ENCODE measurements at regions of chr20 and their contacts with region 1.

Region 1: DNA sequence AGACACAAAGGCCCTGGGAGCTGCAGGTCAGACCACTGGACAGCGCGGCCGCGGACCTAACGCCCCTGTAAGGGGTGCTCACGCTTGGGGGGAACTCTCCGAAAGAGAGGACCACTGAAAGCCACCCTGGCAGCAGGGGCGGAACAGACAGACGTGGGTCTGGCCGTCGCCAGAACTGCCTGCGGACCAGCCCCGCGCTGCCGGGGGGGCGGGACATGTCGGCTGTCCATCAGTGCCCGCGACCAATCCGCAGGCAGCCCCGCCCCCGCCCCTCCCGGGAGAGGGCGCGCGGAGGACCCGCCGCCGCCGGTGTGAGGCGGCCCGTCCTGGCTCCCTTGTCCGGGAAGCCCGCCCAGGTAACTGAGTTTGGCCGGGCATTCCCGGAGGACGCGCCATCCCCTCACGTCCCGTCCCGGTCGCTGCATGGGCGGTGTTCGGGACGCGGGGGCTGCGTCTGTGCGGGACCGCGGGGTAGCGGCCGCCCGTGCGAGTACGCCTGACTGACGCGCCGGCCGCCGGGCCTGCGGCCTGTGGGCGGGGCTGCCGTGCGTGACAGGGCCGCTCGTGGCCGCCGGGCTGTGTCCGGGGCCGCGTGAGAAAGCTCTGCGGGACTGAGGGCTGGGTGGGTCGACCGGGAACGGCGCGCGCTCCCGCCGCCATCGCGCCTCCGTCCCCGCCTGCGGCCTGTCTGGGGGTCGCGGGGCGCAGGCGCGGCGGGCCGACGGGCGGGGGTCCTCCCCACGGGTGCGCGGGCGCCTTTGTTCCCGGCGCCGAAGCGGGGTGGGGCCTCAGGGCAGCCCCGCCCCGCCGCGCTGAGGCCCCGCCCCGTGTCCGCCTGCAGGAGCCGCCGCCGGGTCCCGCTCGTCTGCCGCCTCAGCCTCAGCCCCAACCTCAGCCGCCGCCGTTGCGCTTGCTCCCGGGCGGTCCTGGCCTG is at the start of gene PLCG1:
- DNase-seq: peak; percentile 95
- CTCF ChIP-seq: no peak

Region 2: GRCh38 chr20:41119546-41120235 is 17.3 kb before region 1 on chr20:
- CTCF ChIA-PET with region 1: interaction called, 23 read pairs
- POLR2A ChIA-PET with region 1: no interaction called
- DNase-seq: no peak
- CTCF ChIP-seq: no peak

Region 3: GRCh38 chr20:41125530-41126457 is 11.2 kb before region 1 on chr20:
- CTCF ChIA-PET with region 1: interaction called, 23 read pairs
- POLR2A ChIA-PET with region 1: no interaction called
- DNase-seq: no peak
- CTCF ChIP-seq: no peak

Region 4: DNA sequence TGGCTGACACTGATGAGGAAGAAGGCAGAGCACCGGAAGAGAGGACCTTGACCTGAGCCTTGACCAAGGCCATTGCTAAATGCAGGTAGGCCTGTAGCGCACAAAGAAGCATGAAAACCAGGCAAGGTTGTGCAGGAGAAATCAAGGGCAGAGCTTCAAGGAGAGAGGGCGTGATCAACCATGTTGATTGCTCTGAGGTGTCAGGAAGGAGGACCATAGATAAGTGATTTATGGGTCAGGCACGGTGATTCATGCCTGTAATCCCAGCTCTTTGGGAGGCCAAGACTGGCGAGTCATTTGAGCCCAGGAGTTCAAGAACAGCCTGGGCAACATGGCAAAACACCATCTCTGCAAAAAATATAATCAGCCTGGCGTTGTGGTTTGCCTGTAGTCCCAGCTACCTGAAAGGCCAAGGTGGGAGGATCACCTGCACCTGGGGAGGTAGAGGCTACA is 12.8 kb after region 1 on chr20:
- CTCF ChIA-PET with region 1: interaction called, 64 read pairs
- POLR2A ChIA-PET with region 1: no interaction called
- DNase-seq: no peak
- CTCF ChIP-seq: no peak

Region 5: DNA sequence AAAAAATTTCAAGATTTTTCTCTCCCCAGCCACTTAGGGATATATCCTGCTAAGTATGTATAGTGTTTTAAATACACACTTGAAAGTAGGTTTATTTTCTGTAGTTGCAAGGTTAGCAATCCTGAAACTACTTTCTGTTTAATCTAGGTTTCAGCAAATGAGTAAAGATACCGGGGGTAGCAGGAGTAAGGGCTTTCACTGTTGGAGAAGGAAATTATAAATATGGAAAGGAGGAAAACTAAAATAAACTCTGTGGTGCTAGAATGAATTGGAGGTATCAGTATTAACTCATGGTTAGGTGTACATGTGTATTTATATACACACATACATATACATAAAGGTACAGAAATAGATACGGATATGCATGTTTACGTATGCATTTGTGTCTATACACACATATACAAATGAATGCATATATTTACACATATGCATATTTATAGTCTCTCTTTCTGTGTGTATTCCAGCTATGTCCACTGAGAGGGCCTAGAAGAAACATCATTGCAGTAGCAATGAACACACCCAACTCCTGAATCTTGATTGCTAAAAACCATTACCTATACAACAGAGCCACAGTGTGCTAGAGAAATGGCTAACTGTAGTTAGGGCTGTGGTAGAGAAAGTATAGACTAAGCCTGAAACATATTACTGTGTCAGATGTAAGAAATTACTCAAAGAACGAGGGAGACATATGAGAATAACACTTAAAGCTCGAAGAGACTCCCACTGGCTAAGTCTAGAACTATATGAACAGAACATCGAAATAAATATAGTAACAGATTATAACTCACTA is 325.6 kb after region 1 on chr20:
- CTCF ChIA-PET with region 1: no interaction called
- POLR2A ChIA-PET with region 1: no interaction called
- DNase-seq: peak; percentile 38
- CTCF ChIP-seq: no peak

Measured in GM10248 (cell line).